ENCODE measurements at regions of chr2 and their contacts with region 1.

Region 1: DNA sequence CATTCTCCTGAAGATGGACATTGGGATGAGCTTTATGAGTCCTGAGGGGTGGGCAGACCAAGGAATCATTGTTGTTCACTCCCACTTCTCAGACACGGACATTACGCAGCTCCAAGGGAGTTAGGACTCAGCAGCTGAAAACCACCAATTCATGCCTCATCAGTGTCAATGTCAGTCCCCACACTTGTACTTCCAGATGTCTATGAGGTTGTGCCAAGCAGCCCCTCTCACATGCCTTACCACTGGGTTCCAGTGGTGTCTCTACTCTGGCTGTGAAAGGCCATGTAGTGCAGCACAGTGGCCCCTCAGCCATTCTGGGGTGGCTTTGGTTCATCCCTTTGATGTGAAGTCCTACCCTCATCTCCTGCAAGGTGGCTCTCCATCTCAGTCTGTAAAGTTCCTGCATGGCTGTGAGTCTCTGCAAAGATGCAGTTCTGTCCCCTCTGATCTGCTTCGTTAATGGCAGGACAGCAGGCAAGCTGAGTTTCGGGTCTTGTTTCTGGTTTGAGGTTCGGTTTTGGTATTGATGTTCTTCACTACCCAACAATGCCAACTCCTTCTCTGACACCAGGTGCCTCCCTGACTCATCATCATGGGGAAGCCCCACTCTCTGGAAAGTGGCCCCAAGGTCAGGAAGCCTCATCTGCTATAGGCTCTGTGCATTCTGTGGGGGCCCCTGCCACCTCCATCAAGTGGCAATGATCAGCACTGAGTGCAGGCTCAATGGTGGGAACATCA is 14.0 kb upstream of the COL6A3 start:
- DNase-seq: no peak
- ATAC-seq: no peak

Region 2: GRCh38 chr2:237067998-237068576 is 359.9 kb before region 1 on chr2:
- intact Hi-C with region 1: no loop called
- DNase-seq: no peak
- ATAC-seq: no peak

Region 3: GRCh38 chr2:237304763-237305514 is 123.0 kb before region 1 on chr2:
- intact Hi-C with region 1: no loop called
- DNase-seq: no peak
- ATAC-seq: no peak

Region 4: DNA sequence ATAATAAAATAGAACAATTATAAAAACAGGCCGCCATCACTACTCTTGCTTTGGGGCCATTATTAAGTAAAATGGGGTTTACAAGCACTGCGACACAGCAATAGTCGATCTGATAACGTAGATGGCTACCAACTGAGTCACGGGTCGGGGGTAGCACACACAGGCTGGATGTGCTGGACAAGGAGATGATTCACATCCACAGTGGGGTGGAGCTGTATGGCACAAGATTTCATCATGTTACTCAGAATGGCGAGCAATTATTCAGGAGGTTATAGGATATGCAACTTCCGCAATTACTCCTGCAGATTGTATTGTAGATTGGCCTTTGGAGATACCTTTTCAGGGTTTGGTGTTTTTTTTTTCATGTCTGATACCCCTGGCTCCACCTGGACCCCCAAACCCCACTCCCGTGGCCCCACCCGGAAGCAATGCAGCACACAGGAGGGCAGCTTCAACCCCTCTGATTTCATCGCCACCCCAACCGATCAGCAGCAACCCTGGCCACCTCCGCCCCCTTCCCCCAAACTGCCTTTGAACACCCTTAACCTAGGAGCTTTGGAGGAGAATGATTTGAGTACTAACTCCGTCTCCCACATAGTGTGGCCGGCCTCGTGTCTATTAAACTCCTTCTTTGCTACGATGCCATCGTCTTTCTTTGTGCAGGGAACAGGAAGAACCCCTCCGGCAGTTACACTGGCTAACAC is 37.7 kb after region 1 on chr2:
- intact Hi-C with region 1: loop called (anchors 5 kb)
- DNase-seq: no peak
- ATAC-seq: no peak

Measured in Right ventricle myocardium superior (tissue), 1 donor.